Heart right ventricle (tissue), 16 donors: ENCODE measurements at regions of chr20 and their contacts with region 1.

Region 1: GRCh38 chr20:19661717-19662636 is 96.1 kb upstream of the RIN2 start:
- DNase-seq: peak; percentile 40 to 53
- ATAC-seq: peak; percentile 71 to 83 (median 80)
- H3K4me3 ChIP-seq: no peak overlapping the region
- H3K27ac ChIP-seq: no peak overlapping the region
- H3K4me1 ChIP-seq: peaks cover 0 to 7% (median 5%) of the 10 kb centered on the region in 9 donors
- H3K27me3 ChIP-seq: peaks cover 0 to 34% (median 12%) of the 10 kb centered on the region in 7 donors
- CTCF ChIP-seq: peak; percentile 94 to 99 (median 97)

Region 2: DNA sequence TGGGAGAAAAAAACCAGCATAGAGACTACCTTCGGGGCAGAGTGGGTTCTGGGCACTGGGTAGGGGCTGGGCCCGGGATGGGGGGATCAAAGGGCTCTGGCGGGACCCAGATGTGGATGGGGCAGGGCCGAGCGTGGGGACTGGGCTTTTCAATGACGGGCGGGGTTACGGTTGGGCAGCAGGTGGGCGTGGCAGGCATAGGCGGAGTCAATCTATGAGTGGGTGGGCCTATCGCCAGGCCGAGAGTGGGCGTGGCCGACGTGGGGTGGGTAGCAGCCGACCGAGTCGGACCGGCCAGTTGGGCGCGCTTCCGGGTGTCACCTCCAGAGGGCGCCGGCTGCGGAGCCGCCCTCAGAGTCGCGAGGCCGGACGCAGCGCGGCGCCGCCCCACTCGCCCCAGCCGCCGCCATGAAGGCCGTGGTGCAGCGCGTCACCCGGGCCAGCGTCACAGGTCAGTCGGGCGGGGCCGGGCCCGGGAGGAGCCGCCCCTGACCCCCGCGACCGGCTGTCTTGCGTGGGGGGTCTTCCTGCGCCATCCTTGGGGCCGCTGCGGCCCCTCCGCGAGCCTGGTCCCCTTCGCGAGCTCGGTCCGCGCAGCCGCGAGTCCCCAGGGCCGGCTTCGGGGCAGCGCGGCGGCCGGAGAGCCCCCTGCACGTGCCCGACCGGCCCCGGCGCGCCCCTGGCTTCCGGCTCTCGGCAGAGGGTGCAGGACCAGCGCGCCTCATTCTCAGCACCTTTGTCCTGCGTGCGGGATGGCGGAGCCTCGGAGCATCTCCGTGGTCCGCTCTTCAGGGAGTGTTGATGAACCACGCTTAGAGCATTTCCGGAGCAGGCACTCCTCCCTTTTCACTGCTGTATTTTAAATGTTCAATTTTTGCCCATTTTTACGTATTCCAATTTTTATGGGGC is 1074.1 kb before region 1 on chr20 and contains the start of gene DTD1:
- intact Hi-C with region 1: loop called in 1 of 10 experiments (anchors 5 kb)
- DNase-seq: peak; percentile 94 to 97
- ATAC-seq: peak; percentile 96 to 99 (median 98)
- H3K4me3 ChIP-seq: peak within 1 kb of the TSS; percentile 44 to 98 (median 78)
- H3K27ac ChIP-seq: peak within 1 kb of the TSS; percentile 40 to 88 (median 80)
- H3K4me1 ChIP-seq: peaks cover 0 to 19% (median 8%) of the 10 kb centered on the region in 9 donors
- H3K27me3 ChIP-seq: no peaks in the 10 kb centered on the region
- CTCF ChIP-seq: peak; percentile 44 to 86 (median 81)
- total RNA-seq, gene DTD1: 11.0 to 21.7 (median 14.3) TPM

Region 3: GRCh38 chr20:18904624-18905023 is 757.4 kb before region 1 on chr20:
- intact Hi-C with region 1: loop called in 3 of 10 experiments (anchors 2 to 10 kb)
- DNase-seq: no peak
- ATAC-seq: peak in 2 of 8 donors; percentile 51 to 53
- H3K4me3 ChIP-seq: no peak overlapping the region
- H3K27ac ChIP-seq: no peak overlapping the region
- H3K4me1 ChIP-seq: no peaks in the 10 kb centered on the region
- H3K27me3 ChIP-seq: no peaks in the 10 kb centered on the region
- CTCF ChIP-seq: peak in 7 of 9 donors; percentile 35 to 61 (median 50)

Region 4: GRCh38 chr20:19492687-19493336 is 169.2 kb before region 1 on chr20:
- intact Hi-C with region 1: no loop called
- DNase-seq: no peak
- ATAC-seq: no peak
- H3K4me3 ChIP-seq: no peak overlapping the region
- H3K27ac ChIP-seq: no peak overlapping the region
- H3K4me1 ChIP-seq: peaks cover 0 to 19% (median 0%) of the 10 kb centered on the region in 9 donors
- H3K27me3 ChIP-seq: peaks cover 0 to 4% (median 0%) of the 10 kb centered on the region in 7 donors
- CTCF ChIP-seq: no peak

Region 5: GRCh38 chr20:19588732-19589131 is 73.2 kb before region 1 on chr20:
- intact Hi-C with region 1: loop called in 3 of 10 experiments (anchors 2 to 5 kb)
- DNase-seq: no peak
- ATAC-seq: peak in 2 of 8 donors; percentile 53 to 74
- H3K4me3 ChIP-seq: no peak overlapping the region
- H3K27ac ChIP-seq: no peak overlapping the region
- H3K4me1 ChIP-seq: peaks cover 0 to 6% (median 0%) of the 10 kb centered on the region in 9 donors
- H3K27me3 ChIP-seq: peaks cover 0 to 5% (median 0%) of the 10 kb centered on the region in 7 donors
- CTCF ChIP-seq: peak in 3 of 9 donors; percentile 19 to 33 (median 27)